ENCODE measurements at regions of chr22 and their contacts with region 1.

Region 1: DNA sequence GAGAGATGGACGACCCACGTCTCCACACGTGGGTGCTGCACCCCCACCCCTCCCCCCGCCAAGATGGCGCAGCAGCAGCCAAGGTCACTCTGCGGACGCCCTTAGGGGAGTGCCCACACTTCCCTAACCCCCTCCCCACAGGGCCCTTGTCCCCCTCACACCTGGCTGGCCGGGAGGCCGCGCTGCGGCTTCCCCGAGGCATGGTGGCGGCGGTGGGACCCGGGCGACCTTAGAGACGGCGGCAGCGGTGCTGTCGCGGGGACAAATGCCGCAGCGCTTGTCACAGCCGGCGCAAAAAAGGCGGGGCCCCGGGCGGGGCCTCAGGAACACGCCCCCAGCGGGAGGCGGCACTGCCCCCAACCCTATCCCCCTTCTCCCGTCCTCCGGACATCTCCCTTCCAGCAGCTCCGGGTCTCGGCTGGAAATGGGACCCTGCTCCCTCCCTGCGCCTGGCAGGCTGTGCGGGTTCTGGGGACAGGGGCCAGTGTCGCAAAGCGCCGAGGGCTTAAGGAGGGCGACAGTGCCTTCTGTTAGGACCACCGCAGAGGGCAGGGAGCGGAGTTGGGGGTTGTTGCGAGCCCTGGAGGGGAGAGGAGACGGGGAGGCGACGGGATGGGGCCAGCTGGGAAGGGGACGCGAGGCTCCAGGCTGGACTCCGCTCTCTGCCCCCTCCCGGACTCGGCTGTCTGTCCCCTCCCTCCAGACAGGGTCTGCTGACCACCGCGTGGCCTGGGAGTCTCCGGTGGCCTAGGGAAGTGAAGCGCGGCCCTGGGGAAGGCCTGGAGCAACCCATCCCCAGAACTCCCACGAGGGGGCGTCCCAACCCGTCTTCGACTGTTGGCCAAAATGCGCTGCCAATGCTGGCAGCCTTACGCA is at the start of gene CHCHD10:
- DNase-seq: peak; percentile 54 to 84 (median 77)
- ATAC-seq: peak; percentile 70
- H3K4me3 ChIP-seq: peak within 1 kb of the TSS; percentile 85 to 97
- H3K4me3 Mint-ChIP-seq: peak within 1 kb of the TSS; percentile 82
- H3K27ac ChIP-seq: peak within 1 kb of the TSS; percentile 58 to 72
- H3K27ac Mint-ChIP-seq: peak within 1 kb of the TSS; percentile 52
- H3K4me1 ChIP-seq: peaks cover 63% of the 10 kb centered on the region
- H3K4me1 Mint-ChIP-seq: peaks cover 42% of the 10 kb centered on the region
- H3K27me3 ChIP-seq: no peaks in the 10 kb centered on the region
- H3K27me3 Mint-ChIP-seq: no peaks in the 10 kb centered on the region
- CTCF ChIP-seq: peak; percentile 66
- total RNA-seq, gene CHCHD10: 40.7 to 52.4 TPM

Region 2: DNA sequence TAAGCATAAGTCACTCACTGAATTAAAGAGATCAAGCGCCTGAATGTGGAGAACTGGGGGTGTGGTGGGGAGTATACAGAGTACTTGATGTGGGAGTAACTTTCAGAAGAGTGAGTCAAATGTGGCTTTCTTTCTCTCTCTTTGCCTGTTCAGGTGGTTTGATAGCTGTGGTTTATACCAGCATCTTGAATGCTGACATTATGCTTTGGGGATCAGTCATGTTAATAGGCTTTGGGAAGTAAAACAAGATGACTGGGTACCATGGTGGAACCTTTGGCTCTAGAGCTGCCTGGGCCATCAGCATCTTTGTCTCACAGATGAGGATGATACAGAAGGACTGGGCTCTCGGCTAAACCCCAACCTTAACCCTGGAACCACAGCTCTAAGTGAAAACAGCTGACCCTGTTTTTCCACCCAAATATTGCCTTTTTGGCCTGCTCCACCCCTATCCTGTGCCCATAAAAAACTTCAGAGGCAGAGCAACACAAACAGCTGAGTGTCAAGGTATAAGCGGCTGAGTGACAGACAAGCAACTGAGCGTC is 755.8 kb before region 1 on chr22:
- CTCF ChIA-PET with region 1: no interaction called
- POLR2A ChIA-PET with region 1: no interaction called
- intact Hi-C with region 1: no loop called
- DNase-seq: peak in 4 of 9 experiments; percentile 4 to 62 (median 20)
- ATAC-seq: peak; percentile 85
- H3K4me3 ChIP-seq: no peak overlapping the region
- H3K4me3 Mint-ChIP-seq: no peak overlapping the region
- H3K27ac ChIP-seq: no peak overlapping the region
- H3K27ac Mint-ChIP-seq: no peak overlapping the region
- H3K4me1 ChIP-seq: peaks cover 23% of the 10 kb centered on the region
- H3K4me1 Mint-ChIP-seq: peaks cover 22% of the 10 kb centered on the region
- H3K27me3 ChIP-seq: no peaks in the 10 kb centered on the region
- H3K27me3 Mint-ChIP-seq: peaks cover 27% of the 10 kb centered on the region
- CTCF ChIP-seq: no peak

Region 3: DNA sequence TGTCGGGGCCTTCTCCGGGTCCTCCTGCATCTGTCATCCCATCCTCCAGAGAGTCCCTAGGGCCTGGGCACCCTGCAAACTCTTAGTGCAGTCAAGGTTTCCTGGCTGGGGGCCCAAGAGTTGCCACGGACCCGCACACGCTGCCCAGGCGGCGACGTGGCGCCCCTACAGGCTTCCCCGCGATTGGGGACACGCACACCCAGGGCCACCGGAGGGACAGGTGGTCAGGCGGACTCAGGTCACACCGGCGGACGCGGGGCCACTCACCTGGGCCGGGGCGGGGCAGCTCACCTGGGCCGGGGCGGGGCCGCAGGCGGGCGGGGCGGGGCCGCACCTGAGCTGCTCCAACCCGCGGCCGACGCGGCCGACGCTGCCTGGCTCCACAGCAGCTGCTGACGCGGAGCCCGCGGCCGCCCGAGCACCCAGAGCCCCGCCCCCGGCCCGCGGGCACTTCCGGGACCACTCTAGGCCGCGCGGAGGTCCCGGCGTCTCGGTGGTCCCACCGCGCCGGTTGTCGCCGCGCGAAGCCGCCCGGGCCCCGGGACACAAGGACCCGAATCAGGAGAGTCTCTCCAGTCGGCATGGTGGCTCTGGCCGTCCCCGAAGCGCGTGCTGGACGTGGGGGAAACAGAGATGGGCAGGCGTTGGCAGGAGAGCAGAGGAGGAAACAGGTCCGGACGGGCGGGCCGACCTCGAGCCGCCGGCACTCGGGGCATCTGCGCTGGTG is 17.0 kb before region 1 on chr22 and contains the start of gene ZNF70:
- CTCF ChIA-PET with region 1: interaction called, 4 read pairs
- POLR2A ChIA-PET with region 1: interaction called, 9 read pairs
- intact Hi-C with region 1: loop called in 1 of 2 experiments (anchors 2 kb)
- DNase-seq: peak; percentile 73 to 95 (median 88)
- ATAC-seq: peak; percentile 98
- H3K4me3 ChIP-seq: peak within 1 kb of the TSS; percentile 75 to 76
- H3K4me3 Mint-ChIP-seq: peak within 1 kb of the TSS; percentile 82
- H3K27ac ChIP-seq: peak within 1 kb of the TSS; percentile 62 to 71
- H3K27ac Mint-ChIP-seq: peak within 1 kb of the TSS; percentile 80
- H3K4me1 ChIP-seq: peaks cover 7% of the 10 kb centered on the region
- H3K4me1 Mint-ChIP-seq: peaks cover 17% of the 10 kb centered on the region
- H3K27me3 ChIP-seq: no peaks in the 10 kb centered on the region
- H3K27me3 Mint-ChIP-seq: no peaks in the 10 kb centered on the region
- CTCF ChIP-seq: peak; percentile 13
- total RNA-seq, gene ZNF70: 1.7 to 1.9 TPM

Region 4: GRCh38 chr22:23838681-23839468 is 71.0 kb after region 1 on chr22 and contains the start of gene DERL3:
- CTCF ChIA-PET with region 1: interaction called, 3 read pairs
- POLR2A ChIA-PET with region 1: no interaction called
- intact Hi-C with region 1: loop called in 1 of 2 experiments (anchors 2 kb)
- DNase-seq: peak; percentile 84 to 96 (median 92)
- ATAC-seq: peak; percentile 93
- H3K4me3 ChIP-seq: peak within 1 kb of the TSS; percentile 61 to 77
- H3K4me3 Mint-ChIP-seq: peak within 1 kb of the TSS; percentile 94
- H3K27ac ChIP-seq: peak within 1 kb of the TSS in 1 of 2 experiments; percentile 46
- H3K27ac Mint-ChIP-seq: peak within 1 kb of the TSS; percentile 82
- H3K4me1 ChIP-seq: peaks cover 7% of the 10 kb centered on the region
- H3K4me1 Mint-ChIP-seq: peaks cover 20% of the 10 kb centered on the region
- H3K27me3 ChIP-seq: no peaks in the 10 kb centered on the region
- H3K27me3 Mint-ChIP-seq: no peaks in the 10 kb centered on the region
- CTCF ChIP-seq: no peak
- total RNA-seq, gene DERL3: 0.81 to 0.92 TPM